Mammary epithelial cell (primary cell): ENCODE measurements at regions of chr9 and their contacts with region 1.

Region 1: GRCh38 chr9:110152704-110153374 is 55.1 kb downstream of the C9orf152 start:
- DNase-seq: peak; percentile 45
- H3K4me3 ChIP-seq: no peak overlapping the region
- H3K27ac ChIP-seq: no peak overlapping the region
- H3K4me1 ChIP-seq: peaks cover 28% of the 10 kb centered on the region
- H3K27me3 ChIP-seq: no peaks in the 10 kb centered on the region
- CTCF ChIP-seq: peak; percentile 70 to 75

Region 2: GRCh38 chr9:109590945-109591344 is 561.9 kb before region 1 on chr9:
- CTCF ChIA-PET with region 1: no interaction called
- dilution Hi-C with region 1: no loop called
- in situ Hi-C with region 1: loop called in 1 of 2 experiments (anchors 25 kb)
- intact Hi-C with region 1: no loop called
- DNase-seq: no peak
- H3K4me3 ChIP-seq: no peak overlapping the region
- H3K27ac ChIP-seq: no peak overlapping the region
- H3K4me1 ChIP-seq: no peaks in the 10 kb centered on the region
- H3K27me3 ChIP-seq: peaks cover 2% of the 10 kb centered on the region
- CTCF ChIP-seq: no peak

Region 3: GRCh38 chr9:109903515-109904138 is 249.2 kb before region 1 on chr9:
- CTCF ChIA-PET with region 1: no interaction called
- dilution Hi-C with region 1: loop called (anchors 5 kb)
- in situ Hi-C with region 1: loop called in 1 of 2 experiments (anchors 5 kb)
- intact Hi-C with region 1: loop called (anchors 1 kb)
- DNase-seq: peak; percentile 53
- H3K4me3 ChIP-seq: no peak overlapping the region
- H3K27ac ChIP-seq: no peak overlapping the region
- H3K4me1 ChIP-seq: no peaks in the 10 kb centered on the region
- H3K27me3 ChIP-seq: no peaks in the 10 kb centered on the region
- CTCF ChIP-seq: peak; percentile 88 to 93

Region 4: GRCh38 chr9:110058304-110058953 is 94.4 kb before region 1 on chr9:
- CTCF ChIA-PET with region 1: no interaction called
- dilution Hi-C with region 1: no loop called
- in situ Hi-C with region 1: loop called in 1 of 2 experiments (anchors 5 kb)
- intact Hi-C with region 1: loop called (anchors 1 kb)
- DNase-seq: peak; percentile 57
- H3K4me3 ChIP-seq: no peak overlapping the region
- H3K27ac ChIP-seq: no peak overlapping the region
- H3K4me1 ChIP-seq: peaks cover 5% of the 10 kb centered on the region
- H3K27me3 ChIP-seq: no peaks in the 10 kb centered on the region
- CTCF ChIP-seq: peak; percentile 61 to 79

Region 5: DNA sequence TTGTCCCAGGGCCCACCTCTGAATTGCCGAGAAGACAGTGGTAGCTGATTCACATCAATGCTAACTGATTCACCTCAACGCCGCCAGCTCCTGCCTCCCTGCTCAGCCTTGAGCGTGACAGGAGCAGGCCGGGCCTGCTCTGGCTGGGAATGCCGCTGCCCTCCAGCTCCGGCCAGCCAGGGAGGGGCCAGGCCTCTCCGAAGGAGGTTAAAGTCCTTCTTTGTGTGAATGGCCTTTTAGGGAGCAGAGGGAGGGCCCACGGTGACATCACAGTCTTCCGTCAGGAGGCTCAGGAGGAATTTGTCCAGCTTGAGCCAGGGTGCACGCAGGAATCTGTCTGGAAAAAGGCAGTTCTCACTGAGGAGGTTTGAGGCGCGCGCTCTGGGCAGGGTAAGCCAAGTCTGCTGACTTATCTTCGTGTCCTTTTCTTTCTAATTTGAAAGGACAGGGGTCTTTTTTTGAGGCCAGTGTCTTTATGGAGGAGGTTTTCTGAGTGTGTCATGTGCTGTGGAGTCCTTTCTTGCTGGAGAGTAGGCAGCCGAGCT is 27.6 kb before region 1 on chr9:
- CTCF ChIA-PET with region 1: no interaction called
- dilution Hi-C with region 1: no loop called
- in situ Hi-C with region 1: no loop called
- intact Hi-C with region 1: loop called (anchors 1 kb)
- DNase-seq: peak; percentile 93
- H3K4me3 ChIP-seq: peak overlapping the region; percentile 10 to 32 (median 13)
- H3K27ac ChIP-seq: peak overlapping the region; percentile 79
- H3K4me1 ChIP-seq: peaks cover 74% of the 10 kb centered on the region
- H3K27me3 ChIP-seq: no peaks in the 10 kb centered on the region
- CTCF ChIP-seq: no peak